Activated B cell treated with CpG ODN at 0.5 μM for 24 hours (primary cell): ENCODE measurements at regions of chr10 and their contacts with region 1.

Region 1: DNA sequence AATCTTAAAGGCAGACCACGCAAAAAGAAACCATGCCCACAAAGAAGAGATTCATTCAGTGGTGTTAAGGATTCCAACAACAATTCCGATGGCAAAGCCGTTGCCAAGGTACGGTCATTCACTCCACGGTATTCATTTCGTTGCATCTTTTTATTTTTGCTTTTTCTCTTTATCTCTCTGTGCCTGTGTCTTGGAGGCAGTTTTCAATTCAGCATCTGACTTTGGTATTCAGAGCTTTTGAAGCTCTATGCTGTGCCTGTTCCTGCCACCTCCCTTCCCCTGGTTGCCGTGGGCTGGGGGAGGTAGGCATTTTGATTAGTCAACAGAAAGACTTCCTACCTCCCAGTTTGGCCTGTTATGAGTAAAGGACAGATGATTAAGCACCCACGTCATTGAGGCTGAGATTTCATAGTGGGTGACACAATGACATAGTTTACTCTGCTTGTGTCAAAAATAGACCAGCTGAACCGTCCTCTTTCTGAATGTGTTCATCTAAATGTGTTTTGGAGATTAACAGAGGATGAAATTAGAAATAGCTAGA is 149.5 kb downstream of the ARID5B start:
- DNase-seq: no peak
- ATAC-seq: peak; percentile 60
- H3K4me3 Mint-ChIP-seq: peak overlapping the region; percentile 85
- H3K27ac Mint-ChIP-seq: peak overlapping the region; percentile 93
- H3K4me1 Mint-ChIP-seq: peaks cover 100% of the 10 kb centered on the region
- H3K27me3 Mint-ChIP-seq: no peaks in the 10 kb centered on the region
- CTCF ChIP-seq: no peak

Region 2: DNA sequence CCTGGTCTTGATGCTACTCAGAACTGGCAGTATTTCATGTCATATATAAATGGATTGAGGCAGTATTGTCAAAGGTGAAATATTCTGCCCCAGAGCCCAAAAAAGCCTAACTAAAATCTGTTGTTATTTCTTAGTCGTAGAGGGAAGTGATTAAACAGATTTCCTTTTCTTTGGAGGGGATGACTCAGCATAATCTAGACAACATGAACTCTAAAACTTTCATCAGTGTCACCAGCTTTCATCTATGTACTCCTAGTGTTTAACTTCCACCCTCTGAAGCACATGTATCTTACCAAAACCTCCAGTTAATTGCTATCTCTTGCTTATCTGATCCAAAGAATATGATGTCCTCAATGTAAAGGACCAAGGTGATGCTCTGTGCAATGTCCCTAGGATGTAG is 246.5 kb before region 1 on chr10:
- CTCF ChIA-PET with region 1: no interaction called
- POLR2A ChIA-PET with region 1: no interaction called
- intact Hi-C with region 1: no loop called
- DNase-seq: no peak
- ATAC-seq: no peak
- H3K4me3 Mint-ChIP-seq: no peak overlapping the region
- H3K27ac Mint-ChIP-seq: no peak overlapping the region
- H3K4me1 Mint-ChIP-seq: no peaks in the 10 kb centered on the region
- H3K27me3 Mint-ChIP-seq: no peaks in the 10 kb centered on the region
- CTCF ChIP-seq: no peak

Region 3: GRCh38 chr10:61987951-61988379 is 63.0 kb before region 1 on chr10:
- CTCF ChIA-PET with region 1: interaction called, 4 read pairs
- POLR2A ChIA-PET with region 1: interaction called, 70 read pairs
- intact Hi-C with region 1: loop called (anchors 1 kb)
- DNase-seq: no peak
- ATAC-seq: peak; percentile 90
- H3K4me3 Mint-ChIP-seq: peak overlapping the region; percentile 79
- H3K27ac Mint-ChIP-seq: peak overlapping the region; percentile 97
- H3K4me1 Mint-ChIP-seq: peaks cover 92% of the 10 kb centered on the region
- H3K27me3 Mint-ChIP-seq: no peaks in the 10 kb centered on the region
- CTCF ChIP-seq: no peak

Region 4: DNA sequence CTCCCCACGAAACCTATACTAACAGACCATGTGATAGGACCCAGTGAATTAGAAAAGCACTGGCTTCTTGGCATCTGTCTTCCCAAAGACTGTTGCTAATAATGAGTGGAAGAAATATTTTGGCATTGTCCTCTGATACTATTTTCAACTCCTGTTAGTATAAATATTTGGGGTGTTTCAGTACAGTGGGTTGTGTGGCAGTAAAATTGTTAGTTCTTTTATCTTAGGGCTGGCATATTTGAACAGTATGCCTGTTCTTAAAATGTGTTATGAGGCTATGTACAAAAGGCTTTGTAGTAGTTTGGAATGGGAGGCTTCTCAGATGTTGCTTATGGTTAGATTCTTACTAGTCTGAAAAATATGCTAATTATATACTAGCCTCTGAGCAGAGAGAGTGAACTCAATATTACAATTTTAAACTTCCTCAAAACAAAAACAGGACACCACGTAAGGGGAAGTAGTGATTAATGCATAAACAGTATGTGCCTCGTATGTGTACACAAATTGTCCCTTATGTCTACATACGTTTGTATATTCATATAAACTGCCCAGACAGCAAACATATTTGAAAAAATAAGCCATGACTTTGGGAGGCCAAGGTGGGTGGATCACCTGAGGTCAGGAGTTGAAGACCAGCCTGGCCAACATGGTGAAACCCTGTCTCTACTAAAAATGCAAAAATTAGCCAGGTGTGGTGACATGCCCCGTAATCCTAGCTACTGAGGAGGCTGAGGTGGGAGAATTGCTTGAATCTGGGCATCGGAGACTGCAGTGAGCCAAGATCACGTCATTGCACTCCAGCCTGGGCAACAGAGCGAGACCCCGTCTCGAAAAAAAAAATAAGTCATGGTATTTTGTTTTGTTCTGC is 34.1 kb before region 1 on chr10:
- CTCF ChIA-PET with region 1: interaction called, 3 read pairs
- POLR2A ChIA-PET with region 1: interaction called, 46 read pairs
- intact Hi-C with region 1: loop called (anchors 1 kb)
- DNase-seq: peak; percentile 40
- ATAC-seq: peak; percentile 65
- H3K4me3 Mint-ChIP-seq: peak overlapping the region; percentile 66
- H3K27ac Mint-ChIP-seq: peak overlapping the region; percentile 96
- H3K4me1 Mint-ChIP-seq: peaks cover 84% of the 10 kb centered on the region
- H3K27me3 Mint-ChIP-seq: no peaks in the 10 kb centered on the region
- CTCF ChIP-seq: no peak

Region 5: GRCh38 chr10:62109587-62110293 is 58.8 kb after region 1 on chr10:
- CTCF ChIA-PET with region 1: interaction called, 4 read pairs
- POLR2A ChIA-PET with region 1: interaction called, 16 read pairs
- intact Hi-C with region 1: loop called (anchors 1 kb)
- DNase-seq: no peak
- ATAC-seq: peak; percentile 72
- H3K4me3 Mint-ChIP-seq: peak overlapping the region; percentile 58
- H3K27ac Mint-ChIP-seq: peak overlapping the region; percentile 87
- H3K4me1 Mint-ChIP-seq: peaks cover 70% of the 10 kb centered on the region
- H3K27me3 Mint-ChIP-seq: no peaks in the 10 kb centered on the region
- CTCF ChIP-seq: no peak

Region 6: GRCh38 chr10:62373995-62374861 is 323.3 kb after region 1 on chr10 and contains the start of gene ZNF365:
- CTCF ChIA-PET with region 1: no interaction called
- POLR2A ChIA-PET with region 1: no interaction called
- intact Hi-C with region 1: loop called (anchors 10 kb)
- DNase-seq: peak; percentile 35
- ATAC-seq: peak; percentile 71
- H3K4me3 Mint-ChIP-seq: peak within 1 kb of the TSS; percentile 81
- H3K27ac Mint-ChIP-seq: no peak within 1 kb of the TSS
- H3K4me1 Mint-ChIP-seq: peaks cover 10% of the 10 kb centered on the region
- H3K27me3 Mint-ChIP-seq: peaks cover 12% of the 10 kb centered on the region
- CTCF ChIP-seq: no peak
- total RNA-seq, gene ZNF365: not detected in 2 replicates